Head of caudate nucleus (tissue), 42 donors: ENCODE measurements at regions of chr19 and their contacts with region 1.

Region 1: DNA sequence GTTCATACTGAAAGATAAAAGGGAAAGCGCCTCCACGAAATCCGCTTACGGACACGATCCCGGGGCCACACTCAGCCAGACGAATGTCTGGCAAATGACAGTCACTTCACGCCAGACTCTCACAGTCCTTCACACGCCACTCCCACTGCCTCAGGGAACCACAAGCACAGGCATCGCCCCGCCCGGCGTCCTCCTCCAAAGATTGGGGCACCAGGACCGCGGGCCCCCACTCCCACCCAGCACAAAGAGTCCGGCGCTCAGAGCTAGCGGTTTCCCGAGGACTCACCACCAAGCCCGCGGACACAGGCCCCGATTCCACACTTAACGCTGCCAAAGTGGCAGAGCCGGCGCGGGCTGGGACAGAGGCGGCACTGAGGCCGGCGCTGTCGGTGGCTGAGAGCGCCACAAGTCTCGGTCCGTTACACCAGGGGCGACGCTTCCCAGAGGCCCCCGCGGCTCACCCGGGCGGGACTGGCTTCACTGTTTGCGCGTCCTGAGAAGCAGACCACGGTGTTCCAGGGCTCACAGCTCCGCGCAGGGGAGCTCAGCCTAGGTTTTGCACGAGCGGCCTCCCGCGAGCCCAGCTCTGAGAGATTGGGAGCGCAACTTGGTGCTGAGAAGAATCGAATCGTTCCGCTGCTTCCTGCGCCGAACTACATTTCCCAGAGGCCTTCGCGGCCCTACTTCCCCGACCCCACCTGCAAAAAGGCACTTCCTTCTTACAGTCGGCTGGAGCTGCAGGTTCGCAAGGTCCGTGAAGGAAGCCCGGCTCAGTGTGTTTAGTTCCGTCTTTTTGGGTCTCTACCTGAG is at the start of gene ZNF569:
- DNase-seq: peak; percentile 90 to 98 (median 95)

Region 2: GRCh38 chr19:36837906-36838783 is 628.9 kb before region 1 on chr19 and contains the start of gene ZNF790:
- intact Hi-C with region 1: loop called (anchors 5 kb)
- DNase-seq: peak; percentile 85 to 97 (median 93)

Region 3: GRCh38 chr19:37403403-37403802 is 63.6 kb before region 1 on chr19:
- intact Hi-C with region 1: no loop called
- DNase-seq: no peak

Region 4: GRCh38 chr19:37506387-37507166 is 39.6 kb after region 1 on chr19 and contains the start of gene ZNF793:
- intact Hi-C with region 1: loop called (anchors 2 kb)
- DNase-seq: peak; percentile 75 to 93 (median 84)